H1 (cell line): ENCODE measurements at regions of chr13 and their contacts with region 1.

Region 1: GRCh38 chr13:99656092-99656745 is 154.9 kb downstream of the TM9SF2 start:
- DNase-seq: peak; percentile 46 to 96
- H3K4me3 ChIP-seq: peak overlapping the region in 1 of 4 experiments; percentile 16; a peak in 1 of 8 replicates
- H3K27ac ChIP-seq: no peak overlapping the region
- H3K4me1 ChIP-seq: peaks cover 10 to 24% (median 19%) of the 10 kb centered on the region in 4 experiments
- H3K27me3 ChIP-seq: no peaks in the 10 kb centered on the region
- CTCF ChIP-seq: peak; percentile 92 to 98 (median 97)
- EP300 ChIP-seq: no peak
- POLR2A ChIP-seq: no peak
- RAD21 ChIP-seq: peak; percentile 99

Region 2: GRCh38 chr13:99566125-99567083 is 89.8 kb before region 1 on chr13:
- CTCF ChIA-PET with region 1: no interaction called
- POLR2A ChIA-PET with region 1: no interaction called
- DNase-seq: no peak
- H3K4me3 ChIP-seq: no peak overlapping the region
- H3K27ac ChIP-seq: no peak overlapping the region
- H3K4me1 ChIP-seq: peaks cover 0 to 4% (median 1%) of the 10 kb centered on the region in 4 experiments; a peak in 1 of 7 replicates
- H3K27me3 ChIP-seq: no peaks in the 10 kb centered on the region
- CTCF ChIP-seq: no peak
- EP300 ChIP-seq: no peak
- POLR2A ChIP-seq: no peak
- RAD21 ChIP-seq: no peak

Region 3: DNA sequence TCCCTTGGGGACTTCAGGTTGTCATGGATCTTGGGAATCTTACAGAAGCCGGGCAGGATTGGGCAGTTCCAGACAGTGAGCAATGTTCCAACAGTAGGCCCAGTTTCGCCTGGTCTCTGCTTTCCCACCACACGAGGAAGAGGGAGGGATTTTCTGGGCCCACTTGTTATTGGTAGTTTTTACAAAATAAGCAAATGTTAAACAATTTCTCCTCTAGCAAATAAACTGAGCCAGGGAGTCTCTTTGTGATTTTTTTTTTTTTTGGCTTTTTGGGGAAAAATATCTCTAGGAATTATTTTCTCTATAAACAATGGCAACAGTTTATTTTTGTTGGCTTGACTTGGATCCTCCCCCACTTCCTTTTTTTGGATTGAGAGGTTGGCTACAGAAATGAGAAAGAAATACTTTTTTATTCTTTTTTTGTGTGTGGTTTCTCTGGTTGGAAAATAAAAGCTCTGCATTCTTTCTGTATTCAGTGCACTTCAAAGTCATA is 65.7 kb before region 1 on chr13:
- CTCF ChIA-PET with region 1: no interaction called
- POLR2A ChIA-PET with region 1: no interaction called
- DNase-seq: no peak
- H3K4me3 ChIP-seq: no peak overlapping the region
- H3K27ac ChIP-seq: no peak overlapping the region
- H3K4me1 ChIP-seq: peaks cover 0 to 2% (median 0%) of the 10 kb centered on the region in 4 experiments; a peak in 1 of 7 replicates
- H3K27me3 ChIP-seq: no peaks in the 10 kb centered on the region
- CTCF ChIP-seq: no peak
- EP300 ChIP-seq: no peak
- POLR2A ChIP-seq: no peak
- RAD21 ChIP-seq: no peak

Region 4: DNA sequence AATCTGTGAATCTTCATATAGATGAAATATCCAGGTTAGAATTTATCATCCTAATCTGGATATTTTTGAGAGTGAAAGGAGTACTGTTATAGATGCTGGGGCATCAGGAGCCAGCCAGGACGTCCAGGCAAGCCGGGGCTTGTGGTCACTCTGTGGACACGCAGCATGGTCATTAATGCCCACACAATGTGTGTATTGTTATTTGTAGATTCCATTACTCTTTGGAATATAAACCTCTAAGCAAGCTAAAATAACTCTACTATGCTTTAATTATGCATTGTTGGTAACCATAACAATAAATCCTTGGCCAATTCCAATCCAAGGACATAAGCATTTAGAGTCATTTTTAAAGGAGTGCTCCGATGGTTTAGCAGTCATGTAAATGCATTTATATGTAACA is 17.1 kb before region 1 on chr13:
- CTCF ChIA-PET with region 1: interaction called, 10 read pairs
- POLR2A ChIA-PET with region 1: no interaction called
- DNase-seq: no peak
- H3K4me3 ChIP-seq: no peak overlapping the region
- H3K27ac ChIP-seq: no peak overlapping the region
- H3K4me1 ChIP-seq: no peaks in the 10 kb centered on the region
- H3K27me3 ChIP-seq: no peaks in the 10 kb centered on the region
- CTCF ChIP-seq: no peak
- EP300 ChIP-seq: no peak
- POLR2A ChIP-seq: no peak
- RAD21 ChIP-seq: no peak

Region 5: GRCh38 chr13:99702687-99703319 is 46.6 kb after region 1 on chr13:
- CTCF ChIA-PET with region 1: interaction called, 10 read pairs
- POLR2A ChIA-PET with region 1: interaction called, 16 read pairs
- DNase-seq: no peak
- H3K4me3 ChIP-seq: no peak overlapping the region
- H3K27ac ChIP-seq: peak overlapping the region; percentile 31; the same call in 1 of the 2 replicates
- H3K4me1 ChIP-seq: peaks cover 6 to 37% (median 14%) of the 10 kb centered on the region in 4 experiments
- H3K27me3 ChIP-seq: no peaks in the 10 kb centered on the region
- CTCF ChIP-seq: peak; percentile 25 to 42 (median 26); a peak in 3 of 4 replicates
- EP300 ChIP-seq: no peak
- POLR2A ChIP-seq: no peak
- RAD21 ChIP-seq: peak; percentile 52; a peak in 3 of 4 replicates

Region 6: DNA sequence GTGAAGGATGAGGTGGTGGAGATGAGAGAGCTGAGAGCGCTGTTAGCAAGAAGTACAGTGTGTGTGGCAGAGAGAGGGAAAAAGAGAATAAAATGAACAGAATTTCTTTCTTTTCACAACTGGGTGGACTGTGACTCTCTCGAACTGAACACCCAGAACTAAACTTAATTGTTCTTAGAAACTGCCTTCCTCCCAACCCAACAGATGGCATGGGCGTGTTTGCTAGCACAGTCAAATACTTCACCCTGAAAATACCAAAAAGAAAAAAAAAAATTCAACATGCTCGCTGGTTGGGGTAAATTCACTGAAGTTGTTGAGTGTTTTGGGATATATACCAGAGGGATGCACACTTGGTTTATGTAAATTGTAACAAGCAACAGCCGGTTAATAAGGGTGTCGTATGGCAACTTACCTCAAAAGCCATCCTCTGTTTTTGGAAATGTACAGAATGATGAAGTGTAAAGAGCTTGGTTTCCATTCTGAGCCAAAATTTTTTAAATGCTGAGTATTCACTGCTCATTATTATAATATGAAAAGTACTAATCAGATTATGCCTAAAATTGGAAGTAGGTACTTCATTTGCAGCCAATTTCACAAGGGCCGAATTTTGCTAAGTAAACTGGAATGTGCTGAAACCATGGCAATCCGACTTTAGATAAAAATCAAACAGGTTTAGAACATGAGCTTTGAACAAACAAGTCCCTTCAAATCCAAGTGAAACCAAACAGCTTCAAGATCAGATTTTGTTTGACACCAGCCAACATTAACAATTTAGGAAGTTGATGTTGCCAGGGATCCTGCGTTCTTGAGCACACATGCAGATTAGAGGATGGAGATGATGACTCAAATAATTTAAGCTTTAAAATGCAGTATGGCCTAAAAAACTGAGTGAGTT is 199.6 kb after region 1 on chr13:
- CTCF ChIA-PET with region 1: interaction called, 12 read pairs
- POLR2A ChIA-PET with region 1: no interaction called
- DNase-seq: no peak
- H3K4me3 ChIP-seq: no peak overlapping the region
- H3K27ac ChIP-seq: no peak overlapping the region
- H3K4me1 ChIP-seq: peaks cover 2 to 25% (median 15%) of the 10 kb centered on the region in 4 experiments
- H3K27me3 ChIP-seq: no peaks in the 10 kb centered on the region
- CTCF ChIP-seq: no peak
- EP300 ChIP-seq: no peak
- POLR2A ChIP-seq: no peak
- RAD21 ChIP-seq: no peak

Region 7: GRCh38 chr13:99916366-99917103 is 260.3 kb after region 1 on chr13:
- CTCF ChIA-PET with region 1: interaction called, 58 read pairs
- POLR2A ChIA-PET with region 1: no interaction called
- DNase-seq: no peak
- H3K4me3 ChIP-seq: no peak overlapping the region
- H3K27ac ChIP-seq: no peak overlapping the region
- H3K4me1 ChIP-seq: peaks cover 1 to 4% (median 2%) of the 10 kb centered on the region in 4 experiments; a peak in 5 of 7 replicates
- H3K27me3 ChIP-seq: no peaks in the 10 kb centered on the region
- CTCF ChIP-seq: peak in 2 of 3 experiments; percentile 96 to 100; a peak in 3 of 4 replicates
- EP300 ChIP-seq: no peak
- POLR2A ChIP-seq: no peak
- RAD21 ChIP-seq: peak; percentile 80 to 86

Region 8: GRCh38 chr13:99969919-99970621 is 313.9 kb after region 1 on chr13:
- CTCF ChIA-PET with region 1: interaction called, 12 read pairs
- POLR2A ChIA-PET with region 1: interaction called, 3 read pairs
- DNase-seq: peak in 1 of 2 experiments; percentile 76
- H3K4me3 ChIP-seq: peak overlapping the region; percentile 79 to 96 (median 92)
- H3K27ac ChIP-seq: peak overlapping the region; percentile 64; the same call in 1 of the 2 replicates
- H3K4me1 ChIP-seq: peaks cover 7 to 23% (median 15%) of the 10 kb centered on the region in 4 experiments
- H3K27me3 ChIP-seq: no peaks in the 10 kb centered on the region
- CTCF ChIP-seq: no peak
- EP300 ChIP-seq: peak in 1 of 2 experiments; percentile 54; a peak in 1 of 3 replicates
- POLR2A ChIP-seq: no peak
- RAD21 ChIP-seq: no peak

Region 9: DNA sequence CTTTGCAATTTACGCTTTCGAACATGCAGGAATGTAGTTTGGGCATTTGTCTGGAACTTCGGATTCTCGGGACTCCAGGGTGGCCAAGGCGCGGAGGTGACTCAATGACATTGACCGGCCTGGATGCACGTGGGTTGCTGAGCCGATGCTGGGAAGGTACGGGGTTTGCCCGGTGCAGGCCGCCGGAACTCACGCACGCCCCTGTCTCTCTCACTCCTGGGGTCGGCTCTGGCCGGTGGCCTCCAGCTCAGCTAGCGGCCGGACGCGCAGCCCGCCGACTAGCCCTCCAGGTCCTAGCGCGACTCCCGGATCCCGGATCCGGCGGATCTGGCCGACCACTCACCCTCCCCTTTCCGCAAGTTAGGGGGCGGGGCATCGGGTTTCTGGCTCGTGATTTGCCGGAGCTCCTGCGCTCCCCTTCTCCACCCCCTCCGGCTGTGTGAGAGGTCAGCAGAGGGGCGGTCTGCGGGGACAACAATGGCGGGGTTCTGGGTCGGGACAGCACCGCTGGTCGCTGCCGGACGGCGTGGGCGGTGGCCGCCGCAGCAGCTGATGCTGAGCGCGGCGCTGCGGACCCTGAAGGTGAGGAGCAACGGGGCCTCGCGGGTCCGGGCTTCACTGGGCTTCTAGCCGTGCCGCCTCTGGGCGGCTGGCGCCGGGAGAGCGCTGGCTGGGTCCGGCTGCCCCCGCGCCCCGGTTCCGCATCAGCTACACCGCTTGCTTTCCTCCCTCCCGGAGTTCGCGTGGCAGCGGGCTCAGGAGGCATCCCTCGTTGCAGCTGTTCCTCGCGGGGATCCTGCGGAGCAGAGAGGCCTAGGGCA is 432.6 kb after region 1 on chr13 and contains the start of gene PCCA:
- CTCF ChIA-PET with region 1: interaction called, 10 read pairs
- POLR2A ChIA-PET with region 1: no interaction called
- DNase-seq: peak; percentile 87 to 99
- H3K4me3 ChIP-seq: peak within 1 kb of the TSS; percentile 74 to 92 (median 84)
- H3K27ac ChIP-seq: peak within 1 kb of the TSS; percentile 68
- H3K4me1 ChIP-seq: peaks cover 0 to 5% (median 2%) of the 10 kb centered on the region in 4 experiments; a peak in 6 of 7 replicates
- H3K27me3 ChIP-seq: no peaks in the 10 kb centered on the region
- CTCF ChIP-seq: no peak
- EP300 ChIP-seq: peak; percentile 14 to 72; a peak in 2 of 3 replicates
- POLR2A ChIP-seq: peak in 1 of 2 experiments; percentile 84; a peak in 2 of 3 replicates
- RAD21 ChIP-seq: peak; percentile 9 to 32; a peak in 3 of 4 replicates
- total RNA-seq, gene PCCA: 49.8 and 54.4 TPM in 2 replicates